ENCODE measurements at regions of chr16 and their contacts with region 1.

Region 1: DNA sequence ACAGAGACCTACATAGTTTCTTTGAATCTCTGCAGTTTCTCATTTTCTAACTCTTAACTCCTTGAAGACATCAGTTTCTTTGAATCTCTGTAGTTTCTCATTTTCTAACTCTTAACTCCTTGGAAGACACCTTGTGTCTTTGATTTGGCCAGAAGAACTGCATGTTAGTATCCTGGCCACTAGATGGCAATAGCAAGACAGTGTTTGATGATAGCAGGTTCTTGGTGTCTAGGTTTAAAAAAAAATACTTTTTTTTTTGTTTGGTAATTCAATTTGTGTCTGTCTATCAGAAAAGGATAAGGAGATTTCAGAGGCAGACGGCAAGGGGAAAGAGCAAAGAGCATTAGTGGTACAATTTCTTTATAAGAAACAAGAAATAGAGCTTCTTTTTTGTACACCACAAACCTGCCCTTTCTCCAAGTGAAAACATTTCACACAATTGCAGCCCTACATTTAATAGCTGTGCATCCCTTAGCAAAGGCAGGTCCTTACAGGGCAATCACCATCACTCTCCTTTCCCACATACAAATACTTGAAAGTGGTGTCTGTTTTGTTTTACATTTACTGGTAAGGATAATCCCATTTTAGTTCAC is 1324.9 kb upstream of the CDH8 start:
- DNase-seq: peak; percentile 15
- ATAC-seq: no peak
- H3K4me3 ChIP-seq: no peak overlapping the region
- H3K27ac ChIP-seq: no peak overlapping the region
- H3K4me1 ChIP-seq: no peaks in the 10 kb centered on the region
- H3K27me3 ChIP-seq: no peaks in the 10 kb centered on the region
- CTCF ChIP-seq: peak; percentile 19 to 69 (median 68); a peak in 5 of 6 replicates
- POLR2A ChIP-seq: no peak
- RAD21 ChIP-seq: peak; percentile 49

Region 2: DNA sequence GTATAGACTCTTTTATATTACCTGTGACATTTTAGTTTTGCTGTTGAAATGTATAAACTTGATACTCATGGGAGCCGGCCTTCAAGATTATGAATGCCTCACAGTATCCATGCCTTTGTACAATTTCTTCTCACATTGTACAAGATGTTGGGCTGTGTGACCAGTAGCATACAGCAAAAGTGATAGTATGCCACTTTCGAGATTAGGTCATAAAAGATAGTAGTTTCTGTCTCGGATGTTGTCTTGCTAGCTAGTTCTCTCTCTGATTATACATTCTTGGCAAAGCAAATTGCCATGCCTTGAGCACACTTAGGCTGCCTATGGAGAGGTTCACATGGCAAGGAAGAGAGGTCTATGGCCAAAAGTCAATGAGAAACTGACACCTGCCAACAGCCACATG is 15.1 kb before region 1 on chr16:
- CTCF ChIA-PET with region 1: no interaction called
- POLR2A ChIA-PET with region 1: no interaction called
- RAD21 ChIA-PET with region 1: no interaction called
- intact Hi-C with region 1: no loop called
- DNase-seq: no peak
- ATAC-seq: no peak
- H3K4me3 ChIP-seq: no peak overlapping the region
- H3K27ac ChIP-seq: no peak overlapping the region
- H3K4me1 ChIP-seq: no peaks in the 10 kb centered on the region
- H3K27me3 ChIP-seq: no peaks in the 10 kb centered on the region
- CTCF ChIP-seq: no peak
- POLR2A ChIP-seq: no peak
- RAD21 ChIP-seq: no peak

Region 3: GRCh38 chr16:65117811-65118448 is 1756.8 kb after region 1 on chr16:
- CTCF ChIA-PET with region 1: no interaction called
- POLR2A ChIA-PET with region 1: no interaction called
- RAD21 ChIA-PET with region 1: no interaction called
- intact Hi-C with region 1: loop called (anchors 5 kb)
- DNase-seq: peak; percentile 0
- ATAC-seq: no peak
- H3K4me3 ChIP-seq: no peak overlapping the region
- H3K27ac ChIP-seq: no peak overlapping the region
- H3K4me1 ChIP-seq: no peaks in the 10 kb centered on the region
- H3K27me3 ChIP-seq: no peaks in the 10 kb centered on the region
- CTCF ChIP-seq: peak in 2 of 3 experiments; percentile 66 to 77; a peak in 4 of 6 replicates
- POLR2A ChIP-seq: no peak
- RAD21 ChIP-seq: peak; percentile 41

Measured in HCT116 (cell line).